Left ventricle myocardium inferior (tissue), 1 donor: ENCODE measurements at regions of chr6 and their contacts with region 1.

Region 1: DNA sequence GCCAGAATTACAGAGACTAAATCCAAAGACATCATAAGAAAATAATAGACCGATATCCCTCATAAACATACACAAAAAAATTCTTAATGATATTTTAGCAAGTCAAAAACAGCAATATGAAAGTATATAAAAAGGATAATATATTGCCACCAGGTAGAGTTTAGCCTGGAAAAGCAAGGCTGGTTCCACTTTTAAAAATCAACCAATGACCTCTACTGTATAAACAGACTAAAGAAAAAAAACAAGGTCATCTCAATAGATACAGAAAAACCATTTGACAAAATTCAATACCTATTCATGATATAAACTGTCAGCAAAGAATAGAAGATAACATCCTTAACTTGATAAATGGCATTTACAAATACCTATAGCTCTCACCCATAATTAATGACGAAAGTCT is 9.7 kb downstream of the SERINC1 start:
- DNase-seq: no peak
- H3K4me3 ChIP-seq: no peak overlapping the region
- H3K27ac ChIP-seq: no peak overlapping the region
- H3K4me1 ChIP-seq: peaks cover 100% of the 10 kb centered on the region
- H3K27me3 ChIP-seq: no peaks in the 10 kb centered on the region
- CTCF ChIP-seq: no peak

Region 2: GRCh38 chr6:122361314-122361979 is 100.4 kb before region 1 on chr6:
- intact Hi-C with region 1: no loop called
- DNase-seq: no peak
- H3K4me3 ChIP-seq: no peak overlapping the region
- H3K27ac ChIP-seq: no peak overlapping the region
- H3K4me1 ChIP-seq: no peaks in the 10 kb centered on the region
- H3K27me3 ChIP-seq: no peaks in the 10 kb centered on the region
- CTCF ChIP-seq: no peak

Region 3: GRCh38 chr6:122416825-122417224 is 45.1 kb before region 1 on chr6:
- intact Hi-C with region 1: loop called (anchors 10 kb)
- DNase-seq: no peak
- H3K4me3 ChIP-seq: no peak overlapping the region
- H3K27ac ChIP-seq: peak overlapping the region; percentile 44
- H3K4me1 ChIP-seq: peaks cover 23% of the 10 kb centered on the region
- H3K27me3 ChIP-seq: no peaks in the 10 kb centered on the region
- CTCF ChIP-seq: no peak